ENCODE measurements at regions of chr10 and their contacts with region 1.

Region 1: DNA sequence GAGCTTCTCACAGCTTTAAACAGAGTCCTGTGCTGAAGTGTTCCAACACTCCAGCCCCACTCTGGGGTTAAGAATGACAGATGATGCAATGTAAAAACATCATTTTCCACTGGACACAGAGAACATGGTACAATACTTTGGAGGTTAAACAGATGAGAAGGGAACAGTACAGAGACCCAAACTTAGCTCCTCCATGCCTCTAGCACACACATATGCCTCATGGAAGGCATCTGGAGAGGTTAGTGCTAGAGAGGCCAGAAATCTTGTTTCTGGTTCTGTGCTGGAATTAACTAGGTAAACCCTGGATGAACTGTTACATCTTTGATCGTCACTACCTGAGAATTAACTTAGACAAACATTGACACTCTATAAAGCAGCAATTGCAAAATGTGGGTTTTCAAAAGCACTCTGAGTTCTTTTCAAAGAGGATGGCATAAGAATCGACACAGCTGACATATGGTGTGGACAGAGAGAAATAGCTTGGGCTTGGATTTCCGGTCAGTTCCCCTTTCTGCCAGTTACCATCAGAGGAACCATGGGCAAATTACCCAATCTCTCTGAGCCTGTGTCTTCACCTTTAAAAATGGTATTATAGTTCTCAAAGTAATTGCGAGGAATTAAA is 81.9 kb downstream of the KCNMA1 start:
- DNase-seq: no peak
- H3K4me3 ChIP-seq: no peak overlapping the region
- H3K27ac ChIP-seq: peak overlapping the region; percentile 87 to 93
- H3K4me1 ChIP-seq: peaks cover 24 to 73% of the 10 kb centered on the region in 2 donors
- H3K27me3 ChIP-seq: no peaks in the 10 kb centered on the region
- CTCF ChIP-seq: no peak

Region 2: DNA sequence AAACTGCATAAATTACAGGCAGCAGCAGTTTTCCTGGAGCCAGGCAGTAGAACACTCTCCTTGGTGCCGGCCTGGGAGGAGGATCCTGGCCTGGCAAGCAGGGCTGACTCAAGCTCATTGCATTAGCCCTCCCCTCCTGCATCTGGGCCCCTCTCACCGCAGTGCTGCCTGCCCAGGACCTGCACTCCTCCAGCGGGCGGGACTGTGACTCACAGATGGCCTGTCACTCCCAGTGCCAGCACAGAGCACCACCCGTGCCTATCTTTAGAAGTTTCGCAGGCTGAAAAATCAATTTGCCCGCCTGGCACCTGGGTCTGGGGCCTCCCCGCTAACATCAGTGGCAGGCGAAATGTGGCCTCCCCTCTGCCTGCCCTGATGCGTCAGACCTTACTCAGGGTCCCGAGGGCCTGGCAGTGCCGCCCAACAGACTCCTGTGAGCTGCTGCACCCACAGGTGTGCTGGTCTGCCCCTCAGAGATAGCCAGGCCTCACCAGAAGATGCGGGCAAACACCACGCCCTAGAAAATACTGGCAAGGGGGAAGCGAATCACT is 41.8 kb before region 1 on chr10:
- intact Hi-C with region 1: loop called (anchors 5 kb)
- DNase-seq: peak; percentile 70 to 94
- H3K4me3 ChIP-seq: no peak overlapping the region
- H3K27ac ChIP-seq: peak overlapping the region; percentile 82 to 86
- H3K4me1 ChIP-seq: peaks cover 6 to 36% of the 10 kb centered on the region in 2 donors
- H3K27me3 ChIP-seq: no peaks in the 10 kb centered on the region
- CTCF ChIP-seq: no peak

Region 3: DNA sequence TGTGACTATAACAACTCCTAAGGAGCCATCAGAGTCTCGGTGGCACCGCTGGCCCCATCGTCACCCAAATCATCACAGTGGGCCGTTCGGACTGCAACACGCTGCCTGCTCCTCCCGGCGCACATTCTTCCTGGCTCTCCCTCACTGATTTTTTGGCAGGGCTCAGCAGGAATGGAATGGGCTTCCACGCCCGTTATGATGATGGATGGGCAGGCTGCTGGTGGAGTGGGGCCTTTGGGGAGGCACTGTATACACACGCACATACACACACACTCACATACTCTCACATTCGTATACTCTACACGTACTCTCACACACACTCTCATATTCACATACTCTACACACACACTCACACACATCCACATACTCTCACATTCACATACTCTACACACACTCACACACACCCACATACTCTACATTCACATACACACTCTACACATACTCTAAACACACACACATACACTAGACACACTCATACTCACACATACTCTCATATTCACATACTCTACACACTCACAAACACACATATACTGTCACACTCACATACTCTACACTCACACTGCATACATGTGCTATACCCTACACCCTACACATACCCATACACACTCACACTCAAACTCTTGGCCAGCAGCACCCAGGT is 17.9 kb before region 1 on chr10:
- intact Hi-C with region 1: loop called (anchors 2 kb)
- DNase-seq: peak in 1 of 2 donors; percentile 81
- H3K4me3 ChIP-seq: no peak overlapping the region
- H3K27ac ChIP-seq: peak overlapping the region; percentile 62 to 75
- H3K4me1 ChIP-seq: peaks cover 4 to 25% of the 10 kb centered on the region in 2 donors
- H3K27me3 ChIP-seq: no peaks in the 10 kb centered on the region
- CTCF ChIP-seq: no peak

Region 4: GRCh38 chr10:77592946-77593636 is 37.4 kb after region 1 on chr10:
- intact Hi-C with region 1: loop called (anchors 5 kb)
- DNase-seq: peak; percentile 76 to 90
- H3K4me3 ChIP-seq: no peak overlapping the region
- H3K27ac ChIP-seq: peak overlapping the region; percentile 86 to 96
- H3K4me1 ChIP-seq: peaks cover 12 to 60% of the 10 kb centered on the region in 2 donors
- H3K27me3 ChIP-seq: no peaks in the 10 kb centered on the region
- CTCF ChIP-seq: no peak

Region 5: GRCh38 chr10:77603534-77603927 is 47.8 kb after region 1 on chr10:
- intact Hi-C with region 1: no loop called
- DNase-seq: no peak
- H3K4me3 ChIP-seq: peak overlapping the region in 1 of 2 donors; percentile 10
- H3K27ac ChIP-seq: peak overlapping the region; percentile 4 to 10
- H3K4me1 ChIP-seq: peaks cover 11 to 39% of the 10 kb centered on the region in 2 donors
- H3K27me3 ChIP-seq: no peaks in the 10 kb centered on the region
- CTCF ChIP-seq: no peak